Naive thymus-derived CD4-positive, alpha-beta T cell (primary cell): ENCODE measurements at regions of chr19 and their contacts with region 1.

Region 1: GRCh38 chr19:35013031-35013819 is 13.1 kb downstream of the GRAMD1A start:
- DNase-seq: peak; percentile 73 to 87 (median 79)
- ATAC-seq: peak; percentile 83
- H3K4me3 ChIP-seq: peak overlapping the region; percentile 48
- H3K4me3 Mint-ChIP-seq: peak overlapping the region; percentile 76 to 94 (median 86)
- H3K27ac ChIP-seq: peak overlapping the region; percentile 75
- H3K27ac Mint-ChIP-seq: peak overlapping the region; percentile 76 to 99 (median 96)
- H3K4me1 ChIP-seq: peaks cover 57 to 59% of the 10 kb centered on the region in 2 donors
- H3K4me1 Mint-ChIP-seq: peaks cover 41 to 83% (median 67%) of the 10 kb centered on the region in 7 donors
- H3K27me3 ChIP-seq: no peaks in the 10 kb centered on the region
- H3K27me3 Mint-ChIP-seq: no peaks in the 10 kb centered on the region

Region 2: DNA sequence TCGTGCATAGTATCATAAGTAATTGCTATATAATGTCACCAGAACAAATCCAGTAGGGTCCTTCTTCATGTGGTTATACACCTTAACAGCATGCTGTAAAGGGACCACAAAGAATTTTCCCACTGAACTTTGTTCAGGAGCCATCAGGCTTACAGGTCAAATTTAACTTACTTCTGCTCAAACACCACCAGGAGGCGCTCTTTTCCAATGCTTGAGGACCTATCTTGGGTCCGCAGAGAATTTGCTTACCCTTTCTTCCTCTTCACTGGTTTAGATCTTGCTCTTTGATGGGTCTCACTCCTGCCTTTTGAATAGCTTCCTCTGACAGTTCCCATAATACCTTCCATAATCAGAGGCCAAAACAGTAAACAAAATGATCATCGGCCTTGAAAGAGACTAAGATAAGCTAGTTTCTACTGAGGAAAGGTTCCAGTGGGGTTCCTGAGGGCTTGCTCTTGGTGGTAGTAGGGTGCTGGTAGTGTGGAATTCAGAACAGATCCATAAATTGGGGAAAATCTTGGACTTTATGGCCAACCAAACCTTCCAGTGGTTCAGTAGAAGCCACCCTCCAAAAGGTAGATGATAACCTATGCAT is 373.6 kb before region 1 on chr19:
- CTCF ChIA-PET with region 1: interaction called, 3 read pairs
- POLR2A ChIA-PET with region 1: no interaction called
- intact Hi-C with region 1: loop called in 1 of 2 experiments (anchors 1 kb)
- DNase-seq: peak in 8 of 9 donors; percentile 49 to 73 (median 64)
- ATAC-seq: peak; percentile 64
- H3K4me3 ChIP-seq: no peak overlapping the region
- H3K4me3 Mint-ChIP-seq: no peak overlapping the region
- H3K27ac ChIP-seq: no peak overlapping the region
- H3K27ac Mint-ChIP-seq: no peak overlapping the region
- H3K4me1 ChIP-seq: no peaks in the 10 kb centered on the region
- H3K4me1 Mint-ChIP-seq: peaks cover 0 to 6% (median 0%) of the 10 kb centered on the region in 7 donors
- H3K27me3 ChIP-seq: no peaks in the 10 kb centered on the region
- H3K27me3 Mint-ChIP-seq: peaks cover 0 to 3% (median 0%) of the 10 kb centered on the region in 5 donors

Region 3: DNA sequence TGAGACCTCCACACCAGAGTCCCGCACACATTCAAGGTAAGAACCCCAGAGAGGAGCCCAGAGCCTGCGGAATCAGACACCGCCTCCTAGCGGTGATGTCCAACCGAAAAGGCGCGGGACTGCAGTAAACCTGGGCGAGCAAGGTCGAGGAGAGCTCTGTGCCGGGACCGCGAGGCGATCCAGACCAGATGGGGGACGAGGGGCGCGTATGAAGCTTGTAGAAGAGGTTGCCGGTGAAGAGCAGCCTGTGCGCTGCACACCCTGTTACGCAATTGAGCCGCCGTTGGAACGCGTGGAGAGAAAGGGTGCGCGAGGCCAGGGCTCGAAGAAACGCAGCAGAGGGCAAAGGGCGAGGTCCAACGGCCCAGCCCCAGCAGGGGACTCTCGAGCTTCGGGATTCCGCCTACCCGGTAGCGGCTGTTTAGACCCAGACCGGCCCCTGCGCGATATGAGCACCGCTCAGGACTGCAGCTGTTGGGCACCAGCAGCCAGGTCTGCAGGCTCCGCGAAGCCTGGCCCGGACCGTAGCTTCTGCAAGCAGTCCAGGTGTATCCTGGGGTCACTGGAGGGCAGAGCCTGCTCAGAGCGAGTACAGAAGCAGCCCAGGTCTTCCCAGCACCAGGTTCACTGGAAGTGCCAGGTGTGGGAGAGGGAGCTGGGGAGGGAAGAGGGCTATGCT is 174.3 kb before region 1 on chr19:
- CTCF ChIA-PET with region 1: interaction called, 5 read pairs
- POLR2A ChIA-PET with region 1: no interaction called
- intact Hi-C with region 1: loop called in 1 of 2 experiments (anchors 1 kb)
- DNase-seq: peak in 5 of 9 donors; percentile 18 to 44 (median 37)
- ATAC-seq: peak; percentile 55
- H3K4me3 ChIP-seq: no peak overlapping the region
- H3K4me3 Mint-ChIP-seq: peak overlapping the region; percentile 5 to 78 (median 66)
- H3K27ac ChIP-seq: peak overlapping the region; percentile 17
- H3K27ac Mint-ChIP-seq: peak overlapping the region in 7 of 9 donors; percentile 13 to 82 (median 53)
- H3K4me1 ChIP-seq: no peaks in the 10 kb centered on the region
- H3K4me1 Mint-ChIP-seq: peaks cover 6 to 33% (median 23%) of the 10 kb centered on the region in 7 donors
- H3K27me3 ChIP-seq: peaks cover 0 to 3% of the 10 kb centered on the region in 2 donors
- H3K27me3 Mint-ChIP-seq: peaks cover 0 to 17% (median 0%) of the 10 kb centered on the region in 5 donors

Region 4: DNA sequence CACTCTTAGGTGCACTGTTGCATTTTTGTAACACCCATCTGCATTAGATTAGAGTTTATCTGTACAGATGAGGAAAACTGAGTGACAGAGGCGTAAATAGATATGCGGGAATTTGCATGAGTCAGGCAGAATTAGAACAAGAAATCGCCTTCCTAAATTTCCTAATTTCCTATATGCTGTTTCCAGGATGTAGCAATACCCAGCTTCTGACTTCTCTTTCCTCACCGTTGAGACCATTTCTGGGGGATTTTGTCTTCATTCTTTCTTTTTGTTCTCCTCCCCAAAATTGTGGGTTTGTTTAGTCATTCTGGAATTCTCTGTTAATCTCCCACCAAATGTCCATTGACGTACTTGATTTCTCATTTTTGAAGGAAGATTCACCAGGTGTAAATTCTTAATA is 38.6 kb before region 1 on chr19:
- CTCF ChIA-PET with region 1: interaction called, 138 read pairs
- POLR2A ChIA-PET with region 1: interaction called, 134 read pairs
- intact Hi-C with region 1: loop called (anchors 1 kb)
- DNase-seq: no peak
- ATAC-seq: no peak
- H3K4me3 ChIP-seq: no peak overlapping the region
- H3K4me3 Mint-ChIP-seq: peak overlapping the region in 4 of 10 donors; percentile 29 to 91 (median 38)
- H3K27ac ChIP-seq: no peak overlapping the region
- H3K27ac Mint-ChIP-seq: peak overlapping the region in 4 of 9 donors; percentile 23 to 86 (median 78)
- H3K4me1 ChIP-seq: peaks cover 8 to 9% of the 10 kb centered on the region in 2 donors
- H3K4me1 Mint-ChIP-seq: peaks cover 11 to 35% (median 26%) of the 10 kb centered on the region in 7 donors
- H3K27me3 ChIP-seq: no peaks in the 10 kb centered on the region
- H3K27me3 Mint-ChIP-seq: peaks cover 0 to 7% (median 0%) of the 10 kb centered on the region in 5 donors

Region 5: DNA sequence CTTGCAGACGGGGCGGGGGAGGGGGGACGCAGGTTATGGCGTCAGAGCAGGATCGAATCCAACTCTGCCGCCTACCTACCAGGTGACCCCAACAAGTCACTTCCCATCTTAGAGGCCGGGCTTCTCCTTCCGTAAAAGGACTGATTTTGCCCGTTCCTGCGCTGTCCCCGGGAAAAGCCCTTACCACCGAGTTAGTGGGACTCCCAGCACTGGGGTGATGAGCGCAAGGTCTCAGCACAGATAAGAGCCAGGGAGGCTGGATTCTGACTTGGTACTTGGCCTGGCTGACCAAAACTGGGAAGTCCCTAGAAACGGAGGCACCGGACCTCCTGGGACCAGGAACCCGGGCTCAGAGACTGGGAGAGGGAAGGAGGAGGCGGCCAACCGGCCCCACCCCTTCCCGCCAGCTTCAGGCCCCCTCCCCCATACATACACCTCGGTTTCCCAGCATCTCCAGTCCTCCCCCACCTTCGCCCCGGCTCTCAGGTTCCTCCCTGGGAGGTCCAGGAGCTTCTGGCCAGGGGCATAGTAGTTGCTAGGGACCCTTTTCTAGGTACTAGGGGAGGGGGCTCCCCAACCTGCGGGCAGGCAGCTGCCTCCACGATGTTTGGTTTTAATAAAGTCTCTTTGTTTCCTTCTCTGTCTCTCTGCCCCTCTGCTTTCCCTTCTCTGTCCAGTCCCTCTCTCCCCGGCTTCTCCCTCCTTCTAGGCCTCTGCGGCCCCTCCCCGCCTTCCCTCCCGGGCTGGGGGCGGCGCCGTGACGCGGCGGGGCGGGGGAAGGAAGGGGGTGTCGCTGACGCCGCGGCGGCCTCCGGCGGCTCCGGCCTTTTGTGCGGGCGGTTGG is 13.5 kb before region 1 on chr19 and contains the start of gene GRAMD1A:
- CTCF ChIA-PET with region 1: interaction called, 39 read pairs
- POLR2A ChIA-PET with region 1: interaction called, 237 read pairs
- intact Hi-C with region 1: loop called (anchors 1 kb)
- DNase-seq: peak; percentile 48 to 86 (median 63)
- ATAC-seq: peak; percentile 74
- H3K4me3 ChIP-seq: peak within 1 kb of the TSS; percentile 72
- H3K4me3 Mint-ChIP-seq: peak within 1 kb of the TSS; percentile 94 to 100 (median 98)
- H3K27ac ChIP-seq: peak within 1 kb of the TSS; percentile 97
- H3K27ac Mint-ChIP-seq: peak within 1 kb of the TSS; percentile 95 to 100 (median 98)
- H3K4me1 ChIP-seq: peaks cover 66 to 72% of the 10 kb centered on the region in 2 donors
- H3K4me1 Mint-ChIP-seq: peaks cover 58 to 81% (median 73%) of the 10 kb centered on the region in 7 donors
- H3K27me3 ChIP-seq: no peaks in the 10 kb centered on the region
- H3K27me3 Mint-ChIP-seq: no peaks in the 10 kb centered on the region
- total RNA-seq, gene GRAMD1A: 90.1 to 286 (median 253) TPM

Region 6: GRCh38 chr19:35090506-35091237 is 77.4 kb after region 1 on chr19:
- CTCF ChIA-PET with region 1: interaction called, 3 read pairs
- POLR2A ChIA-PET with region 1: no interaction called
- intact Hi-C with region 1: loop called in 1 of 2 experiments (anchors 2 kb)
- DNase-seq: peak in 7 of 9 donors; percentile 13 to 43 (median 30)
- ATAC-seq: peak; percentile 80
- H3K4me3 ChIP-seq: no peak overlapping the region
- H3K4me3 Mint-ChIP-seq: peak overlapping the region in 4 of 10 donors; percentile 23 to 56 (median 30)
- H3K27ac ChIP-seq: no peak overlapping the region
- H3K27ac Mint-ChIP-seq: no peak overlapping the region
- H3K4me1 ChIP-seq: peaks cover 7 to 16% of the 10 kb centered on the region in 2 donors
- H3K4me1 Mint-ChIP-seq: peaks cover 0 to 10% (median 4%) of the 10 kb centered on the region in 7 donors
- H3K27me3 ChIP-seq: no peaks in the 10 kb centered on the region
- H3K27me3 Mint-ChIP-seq: peaks cover 0 to 10% (median 3%) of the 10 kb centered on the region in 5 donors